ENCODE measurements at regions of chr1 and their contacts with region 1.

Region 1: GRCh38 chr1:39701049-39701439 is 9.8 kb upstream of the HPCAL4 start:
- DNase-seq: peak; percentile 31
- ATAC-seq: peak; percentile 12
- H3K4me3 Mint-ChIP-seq: peak overlapping the region; percentile 50
- H3K27ac Mint-ChIP-seq: no peak overlapping the region
- H3K4me1 Mint-ChIP-seq: peaks cover 19% of the 10 kb centered on the region
- H3K27me3 Mint-ChIP-seq: peaks cover 100% of the 10 kb centered on the region
- CTCF ChIP-seq: no peak

Region 2: GRCh38 chr1:38598118-38598517 is 1102.9 kb before region 1 on chr1:
- CTCF ChIA-PET with region 1: no interaction called
- POLR2A ChIA-PET with region 1: no interaction called
- DNase-seq: no peak
- ATAC-seq: no peak
- H3K4me3 Mint-ChIP-seq: no peak overlapping the region
- H3K27ac Mint-ChIP-seq: no peak overlapping the region
- H3K4me1 Mint-ChIP-seq: peaks cover 16% of the 10 kb centered on the region
- H3K27me3 Mint-ChIP-seq: peaks cover 93% of the 10 kb centered on the region
- CTCF ChIP-seq: no peak

Region 3: GRCh38 chr1:39659110-39659509 is 41.9 kb before region 1 on chr1:
- CTCF ChIA-PET with region 1: interaction called, 34 read pairs
- POLR2A ChIA-PET with region 1: no interaction called
- DNase-seq: no peak
- ATAC-seq: no peak
- H3K4me3 Mint-ChIP-seq: no peak overlapping the region
- H3K27ac Mint-ChIP-seq: no peak overlapping the region
- H3K4me1 Mint-ChIP-seq: no peaks in the 10 kb centered on the region; the same call in none of the 2 replicates
- H3K27me3 Mint-ChIP-seq: peaks cover 100% of the 10 kb centered on the region
- CTCF ChIP-seq: no peak

Region 4: DNA sequence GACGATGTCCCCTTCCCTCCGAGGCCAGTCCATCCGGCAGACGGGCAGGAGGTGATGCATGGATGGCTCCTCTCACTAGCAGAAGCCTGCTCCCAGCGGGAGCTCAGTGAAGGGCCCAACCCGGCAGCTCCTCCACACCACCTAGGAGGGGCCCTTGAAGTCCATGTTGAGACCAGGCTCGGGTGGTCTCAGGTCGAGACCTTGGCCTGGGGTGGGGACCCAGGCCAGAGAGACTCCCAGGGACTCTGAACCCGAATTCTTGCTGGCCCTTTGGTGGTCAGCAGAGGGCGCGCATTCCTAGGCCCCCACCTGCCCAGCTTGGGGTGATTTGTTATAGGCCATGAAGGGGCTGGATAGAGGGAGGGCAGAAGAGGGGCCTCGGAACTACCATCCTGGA is 28.5 kb before region 1 on chr1:
- CTCF ChIA-PET with region 1: interaction called, 58 read pairs
- POLR2A ChIA-PET with region 1: interaction called, 3 read pairs
- DNase-seq: peak; percentile 68
- ATAC-seq: peak; percentile 64
- H3K4me3 Mint-ChIP-seq: peak overlapping the region; percentile 63
- H3K27ac Mint-ChIP-seq: no peak overlapping the region
- H3K4me1 Mint-ChIP-seq: no peaks in the 10 kb centered on the region
- H3K27me3 Mint-ChIP-seq: peaks cover 100% of the 10 kb centered on the region
- CTCF ChIP-seq: peak; percentile 33; the same call in 1 of the 2 replicates

Region 5: DNA sequence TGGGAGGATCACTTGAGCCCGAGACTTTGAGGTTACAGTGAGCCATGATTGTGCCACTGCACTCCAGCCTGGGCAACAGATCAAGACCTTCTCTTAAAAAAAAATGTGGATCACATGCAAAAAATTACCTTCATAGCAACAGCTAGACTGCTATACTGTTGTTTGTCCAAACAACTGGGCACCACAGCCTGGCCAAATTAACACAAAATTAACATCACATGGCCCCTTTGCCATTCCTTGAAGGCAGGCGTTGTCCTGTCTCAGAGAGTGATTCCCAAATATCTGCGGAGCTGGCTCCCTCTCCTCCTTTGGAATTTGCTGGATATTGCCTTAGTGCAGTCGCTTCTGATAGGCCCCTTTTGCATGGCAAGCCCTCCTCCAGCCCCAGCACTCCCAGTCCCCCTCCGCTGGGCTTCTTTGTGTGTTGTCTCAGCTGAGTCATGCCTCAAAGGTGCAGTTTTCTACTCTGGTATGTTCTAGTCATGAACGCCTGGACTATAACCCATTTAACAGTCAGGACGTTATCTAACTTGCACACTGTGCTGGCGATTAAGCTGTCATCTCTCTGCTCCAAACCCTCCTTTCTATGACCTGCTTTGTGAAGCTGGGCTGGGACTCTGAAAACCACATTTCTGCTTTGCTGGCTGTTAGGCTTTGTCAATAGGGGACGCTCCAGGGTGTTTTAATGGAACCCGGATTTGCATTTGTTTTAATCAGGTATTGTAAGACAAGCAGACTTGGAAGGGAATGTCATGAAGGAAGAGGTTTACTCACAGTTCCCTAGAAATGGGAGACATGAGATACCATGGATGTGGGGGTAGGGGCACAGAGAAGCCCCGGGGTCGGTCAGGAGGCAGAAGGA is 10.3 kb after region 1 on chr1:
- CTCF ChIA-PET with region 1: interaction called, 62 read pairs
- POLR2A ChIA-PET with region 1: interaction called, 4 read pairs
- DNase-seq: no peak
- ATAC-seq: peak; percentile 17; the same call in 1 of the 2 replicates
- H3K4me3 Mint-ChIP-seq: no peak overlapping the region
- H3K27ac Mint-ChIP-seq: no peak overlapping the region
- H3K4me1 Mint-ChIP-seq: peaks cover 12% of the 10 kb centered on the region
- H3K27me3 Mint-ChIP-seq: peaks cover 100% of the 10 kb centered on the region
- CTCF ChIP-seq: no peak

Region 6: DNA sequence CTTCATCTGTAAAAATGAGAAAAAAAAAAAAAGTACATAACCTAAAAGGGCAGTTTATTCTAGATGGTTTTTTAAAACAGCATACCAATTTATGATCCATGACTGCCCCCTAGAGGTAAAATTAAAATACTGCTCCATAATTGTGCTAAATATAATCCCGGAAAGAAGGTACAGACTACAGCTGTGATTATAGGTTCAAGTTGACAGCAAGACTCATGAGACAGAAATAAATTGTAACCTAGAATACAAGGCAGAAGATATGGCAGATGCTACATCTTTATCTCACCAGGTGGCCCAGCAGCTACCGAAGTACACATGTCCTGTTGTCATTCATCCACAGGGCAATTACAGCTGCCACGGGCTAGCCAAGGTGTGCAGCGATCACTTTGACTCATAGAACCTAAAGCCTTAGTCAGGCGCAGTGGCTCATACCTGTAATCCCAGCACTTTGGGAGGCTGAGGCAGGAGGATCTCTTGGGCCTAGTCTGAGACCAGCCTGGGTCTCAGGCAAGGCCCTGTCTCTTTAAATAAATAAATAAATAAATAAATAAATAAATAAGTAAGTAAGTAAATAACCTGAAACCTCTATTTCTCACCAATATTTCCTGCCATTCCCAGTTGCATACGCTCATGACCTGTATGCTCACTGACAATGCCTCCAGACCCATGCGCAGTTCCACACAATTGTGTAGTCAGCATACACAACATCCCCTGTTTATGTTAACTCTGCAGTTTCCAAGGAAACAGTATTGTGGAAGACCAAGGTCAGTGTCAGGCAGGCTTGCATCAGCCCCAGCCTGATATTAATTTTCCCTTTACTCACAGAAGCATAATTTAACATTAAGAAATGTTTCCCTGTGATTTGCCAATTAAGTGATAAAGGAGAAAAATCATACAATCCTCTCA is 19.3 kb after region 1 on chr1:
- CTCF ChIA-PET with region 1: interaction called, 35 read pairs
- POLR2A ChIA-PET with region 1: no interaction called
- DNase-seq: no peak
- ATAC-seq: no peak; the same call in 1 of the 2 replicates
- H3K4me3 Mint-ChIP-seq: no peak overlapping the region
- H3K27ac Mint-ChIP-seq: no peak overlapping the region
- H3K4me1 Mint-ChIP-seq: no peaks in the 10 kb centered on the region
- H3K27me3 Mint-ChIP-seq: peaks cover 94% of the 10 kb centered on the region
- CTCF ChIP-seq: peak; percentile 51; the same call in 1 of the 2 replicates

Region 7: GRCh38 chr1:39738622-39739366 is 37.8 kb after region 1 on chr1 and contains the start of gene PPIE:
- CTCF ChIA-PET with region 1: interaction called, 16 read pairs
- POLR2A ChIA-PET with region 1: no interaction called
- DNase-seq: peak; percentile 92
- ATAC-seq: peak; percentile 98
- H3K4me3 Mint-ChIP-seq: peak within 1 kb of the TSS; percentile 89
- H3K27ac Mint-ChIP-seq: peak within 1 kb of the TSS; percentile 66; the same call in 1 of the 2 replicates
- H3K4me1 Mint-ChIP-seq: peaks cover 13% of the 10 kb centered on the region
- H3K27me3 Mint-ChIP-seq: peaks cover 48% of the 10 kb centered on the region
- CTCF ChIP-seq: no peak
- total RNA-seq, gene PPIE: 42.5 to 50.7 TPM (median 48.9 TPM) in 3 replicates

Region 8: DNA sequence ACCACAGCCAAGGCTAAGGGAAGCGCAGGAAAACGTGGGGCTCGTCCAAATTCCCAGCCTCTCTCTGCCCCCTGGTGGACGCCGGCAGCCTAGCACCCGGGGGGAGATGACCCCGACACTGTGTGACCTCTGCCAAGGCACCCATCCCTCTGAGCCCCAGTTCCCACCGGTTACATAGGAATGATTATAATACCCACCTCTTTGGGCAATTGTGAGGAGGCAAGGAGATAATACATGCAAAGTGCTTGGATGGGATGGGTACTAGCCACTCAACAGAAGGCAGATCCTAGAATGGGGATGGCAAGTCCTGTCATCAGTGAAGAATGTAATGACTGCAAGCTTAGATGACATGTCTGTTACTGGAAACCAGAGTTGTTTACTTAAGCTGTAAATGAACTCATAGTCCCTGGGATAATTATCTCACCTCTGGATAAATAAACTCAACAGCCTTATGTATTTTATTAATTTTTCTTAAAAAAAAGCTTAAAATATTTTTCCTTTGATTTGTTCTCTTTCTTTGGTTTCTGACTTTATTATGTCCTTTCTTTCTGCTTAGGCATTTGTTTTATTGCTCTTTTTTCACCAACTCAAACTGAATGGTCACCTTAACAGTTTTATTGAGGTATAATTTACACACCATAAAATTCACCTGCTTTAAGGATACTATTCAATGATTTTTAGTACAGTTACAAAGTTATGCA is 98.9 kb after region 1 on chr1:
- CTCF ChIA-PET with region 1: interaction called, 17 read pairs
- POLR2A ChIA-PET with region 1: no interaction called
- DNase-seq: peak; percentile 88
- ATAC-seq: peak; percentile 92
- H3K4me3 Mint-ChIP-seq: no peak overlapping the region
- H3K27ac Mint-ChIP-seq: no peak overlapping the region
- H3K4me1 Mint-ChIP-seq: peaks cover 9% of the 10 kb centered on the region
- H3K27me3 Mint-ChIP-seq: peaks cover 21% of the 10 kb centered on the region
- CTCF ChIP-seq: peak; percentile 87